ENCODE measurements at regions of chr22 and their contacts with region 1.

Region 1: DNA sequence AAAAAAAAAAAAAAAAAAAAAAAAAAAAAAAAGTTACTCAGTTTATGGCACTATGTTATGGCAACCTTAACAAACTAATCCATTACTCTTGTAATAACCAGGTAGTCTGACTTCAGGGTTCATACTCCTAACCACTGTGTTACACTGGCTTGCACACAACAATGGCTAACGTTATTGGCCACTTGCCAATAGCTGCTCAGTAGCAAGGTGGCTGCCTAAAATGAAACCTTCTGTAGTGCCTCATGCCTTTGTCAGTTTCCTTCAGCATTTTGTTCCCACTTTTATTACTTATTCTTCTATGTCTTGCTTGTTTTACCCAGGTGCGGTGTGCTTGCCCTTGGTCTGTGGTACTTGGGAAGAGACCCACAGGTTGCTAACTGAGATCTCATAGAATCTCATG is 173.4 kb upstream of the LARGE1 start:
- DNase-seq: no peak
- ATAC-seq: no peak
- H3K4me3 ChIP-seq: no peak overlapping the region
- H3K27ac ChIP-seq: no peak overlapping the region
- H3K4me1 ChIP-seq: no peaks in the 10 kb centered on the region
- H3K27me3 ChIP-seq: no peaks in the 10 kb centered on the region
- CTCF ChIP-seq: no peak
- POLR2A ChIP-seq: no peak
- RAD21 ChIP-seq: no peak

Region 2: DNA sequence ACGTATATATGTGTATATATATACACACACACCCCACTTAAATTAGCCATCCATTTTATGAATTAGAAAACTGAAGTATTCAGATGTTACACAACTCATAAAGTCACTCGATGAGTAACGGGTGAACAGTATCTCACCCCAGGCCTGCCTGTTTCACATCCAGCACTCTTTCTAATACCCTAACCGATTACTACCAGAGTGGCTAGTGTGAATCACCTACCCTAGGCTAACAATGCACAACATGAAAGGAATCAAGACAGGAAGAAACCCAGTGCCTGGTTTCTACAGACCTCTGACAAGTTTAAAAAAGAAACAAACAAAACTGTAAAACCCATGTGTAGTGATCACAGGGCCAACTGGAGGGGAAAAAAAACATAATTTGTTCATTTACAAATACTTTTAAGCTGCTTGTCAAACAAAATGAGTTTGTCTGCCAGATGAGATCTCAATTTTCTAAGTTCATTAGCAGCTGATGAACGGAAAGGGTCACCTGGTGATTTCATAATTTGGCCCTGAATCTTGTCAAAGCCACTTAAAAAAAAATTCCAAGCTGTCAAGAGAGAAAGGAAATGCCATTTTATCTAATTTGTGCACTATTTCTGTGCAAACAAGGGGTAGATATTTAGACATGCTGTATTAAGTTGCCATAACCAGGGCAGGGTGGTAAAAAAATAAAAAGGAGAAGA is 308.2 kb before region 1 on chr22:
- CTCF ChIA-PET with region 1: no interaction called
- POLR2A ChIA-PET with region 1: no interaction called
- dilution Hi-C with region 1: no loop called
- in situ Hi-C with region 1: no loop called
- intact Hi-C with region 1: loop called (anchors 10 kb)
- DNase-seq: peak; percentile 88
- ATAC-seq: peak; percentile 92
- H3K4me3 ChIP-seq: no peak overlapping the region
- H3K27ac ChIP-seq: no peak overlapping the region
- H3K4me1 ChIP-seq: no peaks in the 10 kb centered on the region
- H3K27me3 ChIP-seq: no peaks in the 10 kb centered on the region
- CTCF ChIP-seq: no peak
- POLR2A ChIP-seq: no peak
- RAD21 ChIP-seq: no peak

Region 3: GRCh38 chr22:34001701-34002466 is 91.8 kb before region 1 on chr22:
- CTCF ChIA-PET with region 1: no interaction called
- POLR2A ChIA-PET with region 1: no interaction called
- dilution Hi-C with region 1: no loop called
- in situ Hi-C with region 1: no loop called
- intact Hi-C with region 1: no loop called
- DNase-seq: no peak
- ATAC-seq: no peak
- H3K4me3 ChIP-seq: no peak overlapping the region
- H3K27ac ChIP-seq: no peak overlapping the region
- H3K4me1 ChIP-seq: no peaks in the 10 kb centered on the region
- H3K27me3 ChIP-seq: no peaks in the 10 kb centered on the region
- CTCF ChIP-seq: no peak
- POLR2A ChIP-seq: no peak
- RAD21 ChIP-seq: no peak

Region 4: DNA sequence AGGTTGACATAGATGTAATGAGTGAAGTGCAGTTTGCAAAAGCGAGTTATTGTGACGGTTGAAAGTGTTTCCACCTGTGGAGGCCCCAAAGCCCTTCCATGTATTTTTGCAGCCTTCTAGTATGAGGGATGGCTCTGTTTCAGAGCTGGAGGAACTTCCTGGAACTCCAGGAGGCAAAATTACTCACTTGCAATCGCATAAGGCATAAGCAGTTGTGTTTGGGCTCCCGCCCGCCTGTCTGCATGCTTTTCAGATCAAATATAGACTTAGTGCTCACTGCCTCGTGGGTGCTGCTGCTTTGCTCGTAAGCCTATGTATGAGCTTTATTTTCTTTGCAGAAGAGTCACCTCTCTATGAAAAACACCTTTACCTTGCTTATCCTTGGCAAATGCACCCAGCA is 26.6 kb before region 1 on chr22:
- CTCF ChIA-PET with region 1: no interaction called
- POLR2A ChIA-PET with region 1: no interaction called
- dilution Hi-C with region 1: no loop called
- in situ Hi-C with region 1: no loop called
- intact Hi-C with region 1: no loop called
- DNase-seq: no peak
- ATAC-seq: no peak
- H3K4me3 ChIP-seq: no peak overlapping the region
- H3K27ac ChIP-seq: no peak overlapping the region
- H3K4me1 ChIP-seq: no peaks in the 10 kb centered on the region
- H3K27me3 ChIP-seq: no peaks in the 10 kb centered on the region
- CTCF ChIP-seq: no peak
- POLR2A ChIP-seq: no peak
- RAD21 ChIP-seq: no peak

Measured in IMR-90 (cell line).